ENCODE measurements at regions of chr17 and their contacts with region 1.

Region 1: GRCh38 chr17:42027961-42028790 is 8.3 kb downstream of the NKIRAS2 start:
- DNase-seq: no peak
- H3K4me3 ChIP-seq: no peak overlapping the region
- CTCF ChIP-seq: peak; percentile 5

Region 2: GRCh38 chr17:42039794-42040763 is 11.9 kb after region 1 on chr17:
- CTCF ChIA-PET with region 1: interaction called, 24 read pairs
- POLR2A ChIA-PET with region 1: no interaction called
- DNase-seq: no peak
- H3K4me3 ChIP-seq: no peak overlapping the region
- CTCF ChIP-seq: no peak

Region 3: GRCh38 chr17:42045719-42046118 is 17.5 kb after region 1 on chr17:
- CTCF ChIA-PET with region 1: interaction called, 24 read pairs
- POLR2A ChIA-PET with region 1: interaction called, 3 read pairs
- DNase-seq: no peak
- H3K4me3 ChIP-seq: no peak overlapping the region
- CTCF ChIP-seq: no peak

Region 4: GRCh38 chr17:42230225-42230624 is 202.0 kb after region 1 on chr17:
- CTCF ChIA-PET with region 1: no interaction called
- POLR2A ChIA-PET with region 1: no interaction called
- DNase-seq: no peak
- H3K4me3 ChIP-seq: no peak overlapping the region
- CTCF ChIP-seq: no peak

Region 5: DNA sequence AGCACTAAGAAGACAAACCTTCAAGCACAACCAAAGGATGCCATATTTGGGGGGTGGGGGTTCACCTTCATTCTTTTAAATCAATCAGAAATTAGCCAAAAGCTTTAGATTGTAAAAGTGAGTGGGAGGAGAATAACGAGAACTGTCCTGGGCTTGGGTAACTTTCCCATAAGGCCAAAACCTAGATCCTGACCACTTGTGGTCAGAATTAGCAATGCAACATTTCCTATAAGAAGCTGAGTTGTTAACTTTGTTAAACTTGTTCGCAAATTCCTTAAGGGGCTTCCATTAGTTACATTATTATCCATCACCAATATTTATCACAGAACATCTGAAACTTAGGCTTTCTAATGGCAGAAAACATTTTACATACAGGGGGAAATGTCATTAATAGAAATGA is 222.9 kb after region 1 on chr17:
- CTCF ChIA-PET with region 1: no interaction called
- POLR2A ChIA-PET with region 1: no interaction called
- DNase-seq: no peak
- H3K4me3 ChIP-seq: no peak overlapping the region
- CTCF ChIP-seq: no peak

Measured in AG04449 (cell line).